Stomach (tissue), 19 donors: ENCODE measurements at regions of chr14 and their contacts with region 1.

Region 1: GRCh38 chr14:102235275-102235897 is 69.6 kb downstream of the MOK start:
- DNase-seq: peak; percentile 93
- H3K4me3 ChIP-seq: peak overlapping the region; percentile 27 to 36 (median 29)
- H3K27ac ChIP-seq: peak overlapping the region in 2 of 5 donors; percentile 19 to 49
- H3K4me1 ChIP-seq: peaks cover 0 to 15% (median 12%) of the 10 kb centered on the region in 4 donors
- H3K27me3 ChIP-seq: no peaks in the 10 kb centered on the region
- CTCF ChIP-seq: peak in 5 of 7 experiments; percentile 69 to 82 (median 78)
- EP300 ChIP-seq: no peak
- POLR2A ChIP-seq: no peak

Region 2: DNA sequence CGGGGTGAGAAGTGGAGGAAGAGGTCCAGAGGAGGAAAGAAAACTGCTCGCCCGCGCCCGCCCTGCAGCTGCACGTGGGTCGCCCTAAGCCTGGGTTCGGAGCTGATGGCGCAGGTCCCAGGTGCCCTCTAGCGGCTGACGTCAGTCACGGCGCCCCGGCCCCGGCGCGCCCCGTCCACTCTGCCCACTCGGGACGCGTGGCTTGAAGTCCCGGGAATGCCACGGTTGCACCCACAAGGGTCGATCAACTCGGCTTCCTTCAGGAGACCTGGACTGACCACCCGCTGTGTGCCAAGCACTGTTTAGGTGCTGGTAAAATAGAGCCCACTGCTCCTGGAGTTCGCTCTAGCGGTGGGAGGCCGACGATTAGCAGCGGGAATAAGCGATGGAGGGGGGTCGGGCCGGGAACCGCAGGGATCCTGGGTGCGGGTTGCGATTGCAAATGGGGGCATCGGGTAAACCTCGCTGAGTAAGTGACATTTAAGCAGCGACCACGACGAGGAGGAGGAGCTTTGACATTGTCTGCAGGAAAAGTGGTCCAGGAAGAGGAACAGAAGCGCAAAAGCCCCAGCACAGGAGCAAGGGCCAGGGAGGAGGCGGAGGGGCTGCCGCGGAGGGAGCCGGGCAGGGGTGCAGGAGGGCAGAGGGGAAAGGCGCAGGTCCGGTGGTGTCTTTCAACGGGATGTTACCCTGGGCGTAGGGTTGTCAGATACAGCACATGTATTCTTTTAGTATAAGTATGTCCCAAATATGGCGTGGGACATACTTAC is 79.0 kb after region 1 on chr14:
- intact Hi-C with region 1: loop called (anchors 5 kb)
- DNase-seq: peak; percentile 85 to 96
- H3K4me3 ChIP-seq: peak overlapping the region; percentile 37 to 57 (median 46)
- H3K27ac ChIP-seq: peak overlapping the region in 3 of 5 donors; percentile 31 to 56 (median 34)
- H3K4me1 ChIP-seq: peaks cover 10 to 45% (median 39%) of the 10 kb centered on the region in 4 donors
- H3K27me3 ChIP-seq: no peaks in the 10 kb centered on the region
- CTCF ChIP-seq: peak in 5 of 7 experiments; percentile 85 to 95 (median 92)
- EP300 ChIP-seq: no peak
- POLR2A ChIP-seq: no peak

Region 3: GRCh38 chr14:103260620-103261124 is 1025.3 kb after region 1 on chr14:
- intact Hi-C with region 1: no loop called
- DNase-seq: peak; percentile 67 to 74
- H3K4me3 ChIP-seq: peak overlapping the region; percentile 40 to 53 (median 44)
- H3K27ac ChIP-seq: peak overlapping the region; percentile 80 to 89 (median 85)
- H3K4me1 ChIP-seq: peaks cover 0 to 17% (median 12%) of the 10 kb centered on the region in 4 donors
- H3K27me3 ChIP-seq: no peaks in the 10 kb centered on the region
- CTCF ChIP-seq: no peak
- EP300 ChIP-seq: no peak
- POLR2A ChIP-seq: no peak